ENCODE measurements at regions of chr17 and their contacts with region 1.

Region 1: GRCh38 chr17:43006639-43007551 is at the start of gene IFI35:
- ATAC-seq: peak; percentile 70 to 85 (median 80)
- H3K4me3 ChIP-seq: peak within 1 kb of the TSS in 3 of 5 donors; percentile 17 to 24 (median 22)
- H3K27ac ChIP-seq: peak within 1 kb of the TSS; percentile 48 to 49
- H3K4me1 ChIP-seq: no peaks in the 10 kb centered on the region
- total RNA-seq, gene IFI35: 0.76 to 57.9 (median 10.7) TPM in 7 of 8 experiments, not detected in the other

Region 2: GRCh38 chr17:43118679-43119615 is 112.1 kb after region 1 on chr17:
- in situ Hi-C with region 1: no loop called
- ATAC-seq: peak in 1 of 8 experiments; percentile 42
- H3K4me3 ChIP-seq: no peak overlapping the region
- H3K27ac ChIP-seq: no peak overlapping the region
- H3K4me1 ChIP-seq: no peaks in the 10 kb centered on the region

Region 3: DNA sequence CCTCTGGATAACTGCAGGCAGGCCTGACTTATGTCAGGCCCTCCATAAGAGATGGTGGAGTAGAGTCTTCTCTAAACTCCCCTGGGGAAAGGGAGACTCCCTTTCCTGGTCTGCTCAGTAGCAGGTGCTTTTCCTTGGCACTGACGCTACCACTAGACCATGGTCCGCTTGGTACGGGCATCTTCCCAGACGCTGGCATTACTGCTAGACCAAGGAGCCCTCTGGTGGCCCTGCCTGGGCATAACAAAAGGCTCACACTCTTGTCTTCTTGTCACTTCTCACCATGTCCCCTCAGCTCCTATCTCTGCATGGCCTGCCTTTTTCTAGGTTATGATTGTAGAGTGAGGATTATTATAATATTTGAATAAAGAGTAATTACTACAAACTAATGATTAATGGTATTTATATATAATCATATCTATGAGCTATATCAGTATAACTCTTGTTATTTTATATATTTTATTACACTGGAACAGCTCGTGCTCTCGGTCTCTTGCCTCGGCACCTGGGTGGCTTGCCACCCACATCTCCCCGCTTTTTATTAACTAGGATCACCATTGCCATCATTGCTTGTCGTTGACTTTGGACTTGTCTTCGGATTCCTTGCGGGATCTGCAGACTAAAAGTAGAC is 332.1 kb after region 1 on chr17:
- in situ Hi-C with region 1: loop called in 1 of 9 experiments (anchors 25 kb)
- ATAC-seq: no peak
- H3K4me3 ChIP-seq: no peak overlapping the region
- H3K27ac ChIP-seq: no peak overlapping the region
- H3K4me1 ChIP-seq: peaks cover 13 to 14% of the 10 kb centered on the region in 2 donors